OCI-LY7 (cell line): ENCODE measurements at regions of chr17 and their contacts with region 1.

Region 1: GRCh38 chr17:64129764-64130558 is at the start of gene ERN1:
- DNase-seq: peak; percentile 91
- H3K4me3 ChIP-seq: peak within 1 kb of the TSS; percentile 92
- H3K27ac ChIP-seq: peak within 1 kb of the TSS; percentile 61
- H3K4me1 ChIP-seq: peaks cover 63% of the 10 kb centered on the region
- CTCF ChIP-seq: no peak
- total RNA-seq, gene ERN1: 14.7 and 22.0 TPM in 2 replicates

Region 2: DNA sequence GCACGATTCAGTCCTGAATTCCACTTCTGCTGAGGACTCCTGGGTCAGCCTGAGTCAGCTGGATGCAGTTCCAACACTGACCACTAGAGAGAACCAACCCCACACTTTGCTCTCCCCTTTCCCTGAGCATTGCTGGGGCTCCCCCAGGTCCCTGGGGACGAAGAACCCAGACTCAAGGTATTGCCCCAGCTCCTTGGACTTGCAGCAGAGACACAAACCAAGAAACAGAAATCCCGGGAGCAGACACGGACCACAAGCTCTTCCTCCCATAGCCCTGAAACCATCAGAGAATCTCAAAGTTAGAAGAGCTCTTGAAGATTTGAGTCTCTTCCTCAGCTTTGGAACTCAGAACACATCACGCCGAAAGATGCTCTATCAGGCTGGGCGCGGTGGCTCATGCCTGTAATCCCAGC is 210.6 kb before region 1 on chr17:
- CTCF ChIA-PET with region 1: interaction called, 6 read pairs
- POLR2A ChIA-PET with region 1: no interaction called
- intact Hi-C with region 1: loop called (anchors 5 kb)
- DNase-seq: peak; percentile 88
- H3K4me3 ChIP-seq: peak overlapping the region; percentile 42
- H3K27ac ChIP-seq: peak overlapping the region; percentile 63
- H3K4me1 ChIP-seq: peaks cover 71% of the 10 kb centered on the region
- CTCF ChIP-seq: peak; percentile 92

Region 3: GRCh38 chr17:64020056-64020766 is 109.8 kb before region 1 on chr17 and contains the start of gene ICAM2:
- CTCF ChIA-PET with region 1: interaction called, 5 read pairs
- POLR2A ChIA-PET with region 1: interaction called, 43 read pairs
- intact Hi-C with region 1: no loop called
- DNase-seq: peak; percentile 91
- H3K4me3 ChIP-seq: peak within 1 kb of the TSS; percentile 79
- H3K27ac ChIP-seq: peak within 1 kb of the TSS; percentile 97
- H3K4me1 ChIP-seq: peaks cover 67% of the 10 kb centered on the region
- CTCF ChIP-seq: no peak
- total RNA-seq, gene ICAM2: 76.4 and 112 TPM in 2 replicates

Region 4: DNA sequence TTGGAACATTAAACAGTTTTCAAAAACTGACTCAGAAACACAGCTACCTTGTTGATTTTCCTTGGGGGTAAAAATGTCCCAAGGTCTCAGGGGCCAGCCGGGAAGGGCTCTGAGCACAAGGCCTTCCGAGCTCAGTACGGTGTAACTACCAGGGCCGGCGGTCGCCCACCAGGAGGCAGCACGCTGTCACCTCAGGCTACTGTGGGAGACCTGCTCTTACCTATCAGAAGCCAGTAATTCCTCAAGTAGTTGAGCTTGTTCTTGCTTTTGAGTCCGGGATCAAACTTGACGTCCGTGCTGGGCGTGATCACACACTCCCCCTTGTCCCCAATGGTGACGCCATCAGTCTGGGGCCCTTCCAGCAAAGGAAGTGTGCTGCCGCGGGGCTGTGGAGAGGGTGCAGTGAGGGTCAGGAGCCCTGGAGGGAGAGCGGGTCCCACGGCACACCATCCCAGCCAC is 66.2 kb before region 1 on chr17:
- CTCF ChIA-PET with region 1: interaction called, 41 read pairs
- POLR2A ChIA-PET with region 1: interaction called, 8 read pairs
- intact Hi-C with region 1: loop called (anchors 1 kb)
- DNase-seq: peak; percentile 71
- H3K4me3 ChIP-seq: no peak overlapping the region
- H3K27ac ChIP-seq: peak overlapping the region; percentile 36
- H3K4me1 ChIP-seq: peaks cover 57% of the 10 kb centered on the region
- CTCF ChIP-seq: peak; percentile 85

Region 5: GRCh38 chr17:64145757-64146417 is 15.9 kb after region 1 on chr17:
- CTCF ChIA-PET with region 1: no interaction called
- POLR2A ChIA-PET with region 1: interaction called, 19 read pairs
- intact Hi-C with region 1: no loop called
- DNase-seq: peak; percentile 100
- H3K4me3 ChIP-seq: peak overlapping the region; percentile 84
- H3K27ac ChIP-seq: peak overlapping the region; percentile 93
- H3K4me1 ChIP-seq: peaks cover 30% of the 10 kb centered on the region
- CTCF ChIP-seq: peak; percentile 24; the same call in 1 of the 2 replicates

Region 6: GRCh38 chr17:64155751-64156544 is 26.0 kb after region 1 on chr17:
- CTCF ChIA-PET with region 1: no interaction called
- POLR2A ChIA-PET with region 1: no interaction called
- intact Hi-C with region 1: no loop called
- DNase-seq: no peak
- H3K4me3 ChIP-seq: no peak overlapping the region
- H3K27ac ChIP-seq: no peak overlapping the region
- H3K4me1 ChIP-seq: peaks cover 6% of the 10 kb centered on the region
- CTCF ChIP-seq: no peak